ENCODE measurements at regions of chr4 and their contacts with region 1.

Region 1: DNA sequence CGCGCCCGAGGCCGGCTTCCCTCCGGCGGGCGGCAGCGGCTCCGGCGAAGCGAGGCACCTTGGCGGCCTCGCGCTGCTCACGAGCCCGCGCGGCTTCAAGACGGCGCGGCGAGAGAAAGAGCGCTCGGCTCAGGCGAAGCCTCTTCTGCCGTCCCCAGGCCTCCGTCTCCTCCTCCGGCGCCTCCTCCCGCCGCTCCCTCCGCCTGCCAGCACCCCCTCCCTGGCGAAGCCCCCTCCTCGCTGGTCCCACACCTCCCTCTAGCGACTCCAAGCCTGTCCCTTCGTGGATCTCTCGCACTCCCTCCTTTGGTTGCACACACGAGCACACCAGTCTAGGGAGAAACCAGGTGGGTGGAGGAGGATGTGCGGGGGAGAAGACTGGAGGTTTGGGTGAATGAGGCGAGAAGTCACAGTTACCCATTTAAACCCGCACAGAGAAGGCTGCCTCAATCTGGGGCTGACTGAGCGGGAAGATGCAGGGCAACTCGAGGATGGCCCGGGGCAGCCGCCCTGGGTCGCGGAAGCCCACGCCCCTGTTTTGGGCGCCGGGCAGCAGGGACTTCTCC is at the start of gene CAMK2D:
- DNase-seq: peak; percentile 94
- H3K4me3 ChIP-seq: peak within 1 kb of the TSS; percentile 66 to 91 (median 78)
- H3K27ac ChIP-seq: peak within 1 kb of the TSS; percentile 96 to 99 (median 98)
- H3K4me1 ChIP-seq: peaks cover 8 to 36% (median 34%) of the 10 kb centered on the region in 4 donors
- H3K27me3 ChIP-seq: no peaks in the 10 kb centered on the region
- CTCF ChIP-seq: peak; percentile 58 to 64 (median 62)
- EP300 ChIP-seq: no peak
- POLR2A ChIP-seq: peak; percentile 33
- total RNA-seq, gene CAMK2D: 48.2 to 66.2 (median 51.2) TPM

Region 2: GRCh38 chr4:113452868-113453620 is 308.7 kb before region 1 on chr4:
- intact Hi-C with region 1: loop called (anchors 10 kb)
- DNase-seq: no peak
- H3K4me3 ChIP-seq: peak overlapping the region in 2 of 4 donors; percentile 10 to 16
- H3K27ac ChIP-seq: peak overlapping the region; percentile 63 to 79 (median 68)
- H3K4me1 ChIP-seq: peaks cover 27 to 64% (median 52%) of the 10 kb centered on the region in 4 donors
- H3K27me3 ChIP-seq: no peaks in the 10 kb centered on the region
- CTCF ChIP-seq: no peak
- EP300 ChIP-seq: no peak
- POLR2A ChIP-seq: no peak

Region 3: DNA sequence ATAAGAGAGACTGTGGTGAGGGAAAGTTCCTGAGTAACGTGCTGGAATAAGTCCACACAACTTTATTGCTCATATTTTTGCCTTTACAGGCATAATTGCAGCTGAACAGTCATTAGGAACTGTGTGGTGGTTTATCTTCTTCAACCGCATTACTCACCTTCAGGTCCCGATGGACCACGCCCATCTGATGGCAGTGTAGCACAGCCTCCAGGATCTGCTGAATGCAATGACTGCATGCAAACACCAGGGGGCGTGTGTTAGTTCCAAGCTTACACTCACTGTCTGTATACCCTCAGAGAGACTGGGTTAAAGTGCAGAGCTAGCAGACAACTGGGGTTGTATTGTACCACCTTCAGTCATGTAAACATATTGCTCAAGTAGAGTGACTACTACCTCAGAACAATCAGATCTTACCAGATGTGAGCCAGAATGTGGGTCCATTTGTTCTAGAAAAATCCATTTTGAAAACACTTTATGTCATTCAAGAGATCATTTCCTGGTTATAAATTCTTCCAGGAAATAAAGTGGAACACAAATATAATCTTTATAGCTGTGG is 214.1 kb before region 1 on chr4:
- intact Hi-C with region 1: loop called (anchors 2 kb)
- DNase-seq: peak; percentile 95
- H3K4me3 ChIP-seq: no peak overlapping the region
- H3K27ac ChIP-seq: peak overlapping the region in 3 of 4 donors; percentile 30 to 61 (median 49)
- H3K4me1 ChIP-seq: peaks cover 4 to 13% (median 11%) of the 10 kb centered on the region in 4 donors
- H3K27me3 ChIP-seq: no peaks in the 10 kb centered on the region
- CTCF ChIP-seq: peak; percentile 94 to 99 (median 97)
- EP300 ChIP-seq: no peak
- POLR2A ChIP-seq: no peak

Region 4: GRCh38 chr4:113684534-113685091 is 77.1 kb before region 1 on chr4:
- intact Hi-C with region 1: loop called (anchors 5 kb)
- DNase-seq: no peak
- H3K4me3 ChIP-seq: no peak overlapping the region
- H3K27ac ChIP-seq: peak overlapping the region; percentile 50 to 72 (median 60)
- H3K4me1 ChIP-seq: peaks cover 35 to 45% (median 37%) of the 10 kb centered on the region in 4 donors
- H3K27me3 ChIP-seq: no peaks in the 10 kb centered on the region
- CTCF ChIP-seq: peak; percentile 33 to 60 (median 34)
- EP300 ChIP-seq: peak; percentile 88
- POLR2A ChIP-seq: no peak

Region 5: GRCh38 chr4:113979148-113979904 is 217.6 kb after region 1 on chr4 and contains the start of gene ARSJ:
- intact Hi-C with region 1: loop called (anchors 10 kb)
- DNase-seq: no peak
- H3K4me3 ChIP-seq: peak within 1 kb of the TSS; percentile 68 to 72 (median 70)
- H3K27ac ChIP-seq: peak within 1 kb of the TSS; percentile 89 to 92 (median 90)
- H3K4me1 ChIP-seq: peaks cover 0 to 36% (median 26%) of the 10 kb centered on the region in 4 donors
- H3K27me3 ChIP-seq: no peaks in the 10 kb centered on the region
- CTCF ChIP-seq: peak in 1 of 3 experiments; percentile 13
- EP300 ChIP-seq: no peak
- POLR2A ChIP-seq: no peak
- total RNA-seq, gene ARSJ: 18.1 to 26.0 (median 21.2) TPM